Stomach (tissue), 19 donors: ENCODE measurements at regions of chr19 and their contacts with region 1.

Region 1: DNA sequence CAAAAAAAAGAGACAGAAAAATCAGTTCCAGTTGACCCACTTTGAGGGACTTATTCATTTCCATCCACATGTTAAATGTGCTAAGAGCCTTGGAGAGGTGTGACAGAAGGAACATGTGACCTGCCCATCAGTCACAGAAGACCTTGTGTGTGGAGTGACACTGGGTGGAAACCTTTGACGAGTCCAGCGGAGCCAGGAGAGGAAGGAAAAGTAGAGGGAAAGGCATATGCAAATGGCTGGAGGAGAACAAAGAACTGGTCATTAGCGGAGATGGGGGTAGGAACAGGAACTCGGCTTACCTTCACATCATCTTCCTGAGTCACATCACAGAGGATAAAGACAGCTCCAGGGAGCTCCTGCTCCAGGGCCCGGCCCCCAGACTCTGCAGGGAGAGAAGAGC is 2.3 kb downstream of the HSD17B14 start:
- DNase-seq: no peak
- H3K4me3 ChIP-seq: no peak overlapping the region
- H3K27ac ChIP-seq: no peak overlapping the region
- H3K4me1 ChIP-seq: peaks cover 12 to 27% (median 23%) of the 10 kb centered on the region in 4 donors
- H3K27me3 ChIP-seq: peaks cover 0 to 6% (median 0%) of the 10 kb centered on the region in 3 donors
- CTCF ChIP-seq: no peak
- EP300 ChIP-seq: no peak
- POLR2A ChIP-seq: no peak

Region 2: DNA sequence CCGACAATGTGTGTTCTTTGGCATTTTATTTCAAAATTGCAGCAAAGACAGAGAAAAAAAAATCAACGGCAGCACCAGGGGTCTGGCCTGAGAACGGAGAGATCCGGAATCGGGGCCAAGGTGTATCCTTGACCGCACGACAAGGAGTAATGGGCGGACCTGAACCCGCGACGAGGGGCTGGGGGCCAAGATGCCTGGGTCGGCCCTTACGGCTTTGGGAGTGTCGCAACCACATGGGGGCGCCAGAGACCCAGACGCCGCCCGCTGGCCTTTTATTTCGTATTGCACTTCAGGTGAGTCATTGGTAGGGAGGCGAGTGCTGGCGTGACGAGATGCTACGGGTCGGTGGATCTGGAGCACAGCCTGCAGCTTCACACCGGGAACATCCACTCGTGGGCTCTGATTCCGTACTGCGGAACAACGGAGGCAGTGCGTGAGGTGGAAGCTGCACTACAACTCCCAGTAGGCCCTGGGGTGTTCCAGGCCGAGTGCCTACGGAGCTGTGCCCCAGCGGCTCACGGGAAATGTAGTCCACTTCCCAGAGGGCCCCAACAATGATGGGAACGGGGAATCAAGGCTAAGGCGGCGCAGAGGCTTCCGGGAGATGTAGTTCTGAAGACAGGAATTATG is 38.8 kb before region 1 on chr19:
- intact Hi-C with region 1: loop called (anchors 5 kb)
- DNase-seq: peak; percentile 94 to 98
- H3K4me3 ChIP-seq: peak overlapping the region; percentile 44 to 57 (median 48)
- H3K27ac ChIP-seq: peak overlapping the region; percentile 73 to 93 (median 85)
- H3K4me1 ChIP-seq: peaks cover 16 to 27% (median 18%) of the 10 kb centered on the region in 4 donors
- H3K27me3 ChIP-seq: no peaks in the 10 kb centered on the region
- CTCF ChIP-seq: peak in 6 of 7 experiments; percentile 26 to 99 (median 94)
- EP300 ChIP-seq: no peak
- POLR2A ChIP-seq: no peak

Region 3: DNA sequence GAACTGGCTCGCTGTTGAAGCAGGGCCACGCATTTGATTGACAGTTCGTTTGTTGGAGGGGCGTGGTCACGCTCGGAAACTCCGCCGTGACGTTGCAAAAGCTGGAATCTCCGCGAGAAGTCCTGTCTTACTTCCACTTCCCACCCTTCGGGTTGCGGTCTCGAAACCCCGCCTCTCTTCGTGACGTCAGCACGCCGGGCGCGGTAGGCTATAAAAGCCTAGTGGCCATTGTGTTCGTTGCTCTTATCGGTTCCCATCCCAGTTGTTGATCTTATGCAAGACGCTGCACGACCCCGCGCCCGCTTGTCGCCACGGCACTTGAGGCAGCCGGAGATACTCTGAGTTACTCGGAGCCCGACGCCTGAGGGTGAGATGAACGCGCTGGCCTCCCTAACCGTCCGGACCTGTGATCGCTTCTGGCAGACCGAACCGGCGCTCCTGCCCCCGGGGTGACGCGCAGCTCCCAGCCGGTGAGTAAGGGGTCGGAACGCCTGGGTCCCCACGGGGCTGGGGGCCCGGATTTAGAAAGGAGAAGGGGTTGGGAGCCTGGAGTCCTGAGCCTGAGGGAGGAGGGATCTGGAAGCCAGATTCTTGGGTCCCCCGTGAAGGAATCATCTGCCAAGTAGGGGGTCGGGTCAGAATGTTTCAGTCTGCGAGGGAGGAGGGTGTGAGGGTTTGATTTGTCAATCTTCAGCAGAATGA is 38.4 kb after region 1 on chr19 and contains the start of gene PPP1R15A:
- intact Hi-C with region 1: no loop called
- DNase-seq: peak; percentile 99
- H3K4me3 ChIP-seq: peak within 1 kb of the TSS; percentile 73 to 100 (median 96)
- H3K27ac ChIP-seq: peak within 1 kb of the TSS; percentile 98 to 100 (median 100)
- H3K4me1 ChIP-seq: peaks cover 55 to 67% (median 65%) of the 10 kb centered on the region in 4 donors
- H3K27me3 ChIP-seq: no peaks in the 10 kb centered on the region
- CTCF ChIP-seq: peak in 2 of 7 experiments; percentile 8 to 41
- EP300 ChIP-seq: peak; percentile 50
- POLR2A ChIP-seq: peak in 2 of 4 donors; percentile 95 to 98
- total RNA-seq, gene PPP1R15A: 14.6 to 107 (median 35.1) TPM